ENCODE measurements at regions of chr17 and their contacts with region 1.

Region 1: DNA sequence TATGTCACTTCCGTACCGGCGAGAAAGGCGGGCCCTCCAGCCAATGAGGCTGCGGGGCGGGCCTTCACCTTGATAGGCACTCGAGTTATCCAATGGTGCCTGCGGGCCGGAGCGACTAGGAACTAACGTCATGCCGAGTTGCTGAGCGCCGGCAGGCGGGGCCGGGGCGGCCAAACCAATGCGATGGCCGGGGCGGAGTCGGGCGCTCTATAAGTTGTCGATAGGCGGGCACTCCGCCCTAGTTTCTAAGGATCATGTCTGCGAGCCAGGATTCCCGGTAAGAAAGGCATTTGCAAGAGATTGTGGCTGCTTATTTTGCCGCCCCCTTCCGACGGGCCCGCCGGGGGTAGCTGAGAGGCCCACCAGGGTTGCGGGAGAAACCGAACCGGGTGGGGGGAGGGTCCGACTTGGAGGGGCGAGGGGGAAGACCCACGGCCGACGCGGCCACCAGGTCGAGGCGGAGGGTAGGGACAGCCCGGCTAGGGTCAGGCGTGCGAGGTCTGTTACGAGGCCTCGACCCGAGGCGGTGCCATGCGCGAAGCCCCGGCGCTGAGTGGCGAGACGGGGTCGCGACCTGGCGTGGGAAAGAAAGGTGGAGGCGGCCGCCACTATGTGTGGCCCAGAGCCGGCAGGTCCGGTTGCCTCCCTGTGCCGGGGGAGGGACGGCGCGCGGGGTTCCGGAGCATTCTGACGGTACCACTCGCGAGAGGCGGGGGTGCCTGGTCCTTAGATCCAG is 6.7 kb upstream of the CD68 start:
- DNase-seq: peak; percentile 99
- ATAC-seq: peak; percentile 88
- H3K4me3 ChIP-seq: peak overlapping the region; percentile 77
- H3K27ac ChIP-seq: peak overlapping the region; percentile 97
- H3K4me1 ChIP-seq: peaks cover 8% of the 10 kb centered on the region
- H3K27me3 ChIP-seq: no peaks in the 10 kb centered on the region
- CTCF ChIP-seq: no peak
- POLR2A ChIP-seq: peak; percentile 100
- RAD21 ChIP-seq: no peak

Region 2: GRCh38 chr17:7523033-7523432 is 49.7 kb before region 1 on chr17:
- CTCF ChIA-PET with region 1: no interaction called
- POLR2A ChIA-PET with region 1: interaction called, 14 read pairs
- dilution Hi-C with region 1: no loop called
- in situ Hi-C with region 1: no loop called
- intact Hi-C with region 1: no loop called
- DNase-seq: no peak
- ATAC-seq: no peak
- H3K4me3 ChIP-seq: no peak overlapping the region
- H3K27ac ChIP-seq: no peak overlapping the region
- H3K4me1 ChIP-seq: no peaks in the 10 kb centered on the region
- H3K27me3 ChIP-seq: no peaks in the 10 kb centered on the region
- CTCF ChIP-seq: peak; percentile 30
- POLR2A ChIP-seq: no peak
- RAD21 ChIP-seq: no peak

Region 3: GRCh38 chr17:7583253-7584109 is 10.7 kb after region 1 on chr17 and contains the start of gene MPDU1:
- CTCF ChIA-PET with region 1: interaction called, 9 read pairs
- POLR2A ChIA-PET with region 1: interaction called, 12 read pairs
- dilution Hi-C with region 1: no loop called
- in situ Hi-C with region 1: no loop called
- intact Hi-C with region 1: no loop called
- DNase-seq: peak; percentile 96
- ATAC-seq: peak; percentile 70
- H3K4me3 ChIP-seq: peak within 1 kb of the TSS; percentile 68
- H3K27ac ChIP-seq: peak within 1 kb of the TSS; percentile 93
- H3K4me1 ChIP-seq: peaks cover 43% of the 10 kb centered on the region
- H3K27me3 ChIP-seq: no peaks in the 10 kb centered on the region
- CTCF ChIP-seq: no peak
- POLR2A ChIP-seq: peak; percentile 98
- RAD21 ChIP-seq: no peak
- total RNA-seq, gene MPDU1: 142 and 149 TPM in 2 replicates

Region 4: DNA sequence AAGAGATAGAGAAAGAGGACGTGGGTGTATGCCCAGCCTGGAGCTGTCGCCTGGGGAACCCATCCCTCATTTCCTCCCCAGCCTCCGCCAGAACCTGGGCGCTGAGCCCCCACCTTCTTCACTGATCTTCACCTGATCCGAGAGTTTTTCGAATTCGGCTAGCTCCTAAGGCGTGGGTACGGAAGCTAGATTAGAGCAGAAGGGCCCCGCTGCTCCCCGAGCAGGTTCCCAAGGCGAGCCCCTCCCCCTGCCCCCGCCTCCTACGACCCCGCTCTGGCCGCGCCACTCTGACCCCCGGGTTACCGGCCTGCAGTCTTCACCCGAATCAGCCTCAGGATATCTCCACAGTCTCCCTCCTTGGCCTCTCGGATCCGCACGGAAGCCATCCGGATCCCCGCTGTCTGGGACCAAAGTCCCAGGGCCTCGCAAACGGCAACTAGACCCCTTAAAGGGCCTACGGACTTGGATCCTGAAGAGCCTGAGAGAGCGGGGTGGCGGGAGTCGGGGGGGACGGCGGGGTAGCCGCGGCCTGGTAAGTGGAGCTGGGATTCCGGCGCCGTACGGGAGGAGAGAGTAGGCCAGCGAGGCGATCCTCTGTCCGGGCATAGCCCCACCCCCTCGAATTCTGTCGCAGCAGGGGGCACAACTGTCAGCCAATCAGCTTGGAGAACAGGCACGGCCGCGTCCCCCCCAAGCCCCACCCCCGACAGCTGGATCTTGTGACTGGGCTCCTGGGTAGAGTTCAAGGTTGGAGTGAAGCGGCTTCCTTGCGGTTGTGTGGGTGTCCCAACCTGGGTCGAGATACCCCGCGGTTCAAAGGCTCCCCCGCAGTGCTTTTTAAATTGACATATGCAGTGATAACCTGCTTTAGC is 54.7 kb after region 1 on chr17 and contains the start of gene SAT2:
- CTCF ChIA-PET with region 1: no interaction called
- POLR2A ChIA-PET with region 1: no interaction called
- dilution Hi-C with region 1: no loop called
- in situ Hi-C with region 1: no loop called
- intact Hi-C with region 1: no loop called
- DNase-seq: peak; percentile 94
- ATAC-seq: peak; percentile 99
- H3K4me3 ChIP-seq: peak within 1 kb of the TSS; percentile 86
- H3K27ac ChIP-seq: peak within 1 kb of the TSS; percentile 98
- H3K4me1 ChIP-seq: peaks cover 4% of the 10 kb centered on the region; the same call in 1 of the 2 replicates
- H3K27me3 ChIP-seq: no peaks in the 10 kb centered on the region
- CTCF ChIP-seq: no peak
- POLR2A ChIP-seq: peak; percentile 85
- RAD21 ChIP-seq: no peak
- total RNA-seq, gene SAT2: 20.4 and 21.4 TPM in 2 replicates

Measured in IMR-90 (cell line).